ENCODE measurements at regions of chr20 and their contacts with region 1.

Region 1: GRCh38 chr20:44109951-44110361 is 77.0 kb downstream of the JPH2 start:
- DNase-seq: no peak
- ATAC-seq: no peak

Region 2: GRCh38 chr20:44187051-44187762 is 77.3 kb after region 1 on chr20 and contains the start of gene JPH2:
- intact Hi-C with region 1: loop called (anchors 10 kb)
- DNase-seq: no peak
- ATAC-seq: peak; percentile 63
- total RNA-seq, gene JPH2: 1.5 TPM